ENCODE measurements at regions of chr3 and their contacts with region 1.

Region 1: GRCh38 chr3:12423918-12424630 is 60.2 kb upstream of the TSEN2 start:
- DNase-seq: no peak
- H3K4me3 Mint-ChIP-seq: no peak overlapping the region
- H3K27ac Mint-ChIP-seq: peak overlapping the region; percentile 66
- H3K4me1 Mint-ChIP-seq: peaks cover 52% of the 10 kb centered on the region
- H3K27me3 Mint-ChIP-seq: no peaks in the 10 kb centered on the region

Region 2: DNA sequence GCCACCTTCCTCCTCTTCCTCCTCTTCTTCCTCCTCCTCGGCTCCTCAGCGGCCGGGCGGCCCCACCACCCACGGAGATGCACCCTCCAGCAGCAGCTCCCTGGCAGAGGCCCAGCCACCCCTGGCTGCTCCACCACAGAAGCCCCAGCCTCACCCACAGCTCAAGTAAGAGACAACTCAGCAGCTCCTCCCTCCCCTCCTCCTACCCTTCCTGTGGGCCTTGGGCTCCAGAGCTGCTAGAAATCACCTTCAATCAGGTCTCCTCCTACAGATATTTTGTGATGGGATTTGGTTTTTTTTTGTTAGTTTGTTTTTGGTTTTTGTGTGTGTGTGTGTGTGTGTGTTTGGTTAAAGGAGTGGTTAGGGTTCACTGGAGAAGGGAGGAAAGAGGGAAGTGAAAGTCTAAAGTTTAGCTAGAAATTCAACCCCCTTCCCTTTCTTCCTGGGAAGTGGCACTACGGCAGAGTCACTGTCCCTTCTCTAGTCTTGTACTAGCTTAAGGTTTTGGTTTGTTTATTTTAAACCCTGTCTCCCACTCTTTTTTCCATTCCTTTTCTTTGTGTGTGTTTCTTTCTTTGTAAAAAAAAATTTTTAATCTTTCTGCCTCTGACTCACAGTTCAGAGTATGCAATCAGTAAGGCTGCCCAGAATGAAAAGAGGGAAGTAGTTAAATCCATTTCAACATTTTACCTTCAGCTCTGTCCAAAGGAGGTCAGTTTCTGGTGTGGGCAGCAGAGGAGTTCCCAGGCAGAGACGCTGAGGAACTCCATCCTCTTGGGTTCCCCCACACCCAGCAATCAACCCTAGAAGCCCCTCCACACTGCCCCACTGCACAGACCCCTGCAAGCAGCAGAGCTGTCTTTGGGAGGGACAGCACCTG is 236.4 kb before region 1 on chr3:
- intact Hi-C with region 1: loop called (anchors 2 kb)
- DNase-seq: peak; percentile 50
- H3K4me3 Mint-ChIP-seq: peak overlapping the region; percentile 32
- H3K27ac Mint-ChIP-seq: peak overlapping the region; percentile 93
- H3K4me1 Mint-ChIP-seq: peaks cover 78% of the 10 kb centered on the region
- H3K27me3 Mint-ChIP-seq: no peaks in the 10 kb centered on the region

Region 3: DNA sequence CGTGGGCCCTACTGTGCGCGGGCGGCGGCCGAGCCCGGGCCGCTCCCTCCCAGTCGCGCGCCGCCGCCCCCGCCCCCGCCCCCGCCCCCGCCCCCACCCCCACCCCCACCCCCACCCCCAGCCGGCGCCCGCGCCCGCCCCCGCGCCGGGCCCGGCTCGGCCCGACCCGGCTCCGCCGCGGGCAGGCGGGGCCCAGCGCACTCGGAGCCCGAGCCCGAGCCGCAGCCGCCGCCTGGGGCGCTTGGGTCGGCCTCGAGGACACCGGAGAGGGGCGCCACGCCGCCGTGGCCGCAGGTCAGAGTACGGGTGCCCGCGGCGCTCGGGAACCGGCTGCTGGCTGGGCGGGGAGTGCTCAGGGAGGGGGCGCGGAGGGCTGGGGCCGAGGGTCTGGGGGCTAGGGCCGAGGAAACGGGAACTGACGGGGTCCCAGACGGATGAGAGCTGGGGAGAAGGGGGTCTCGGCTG is 136.3 kb before region 1 on chr3:
- intact Hi-C with region 1: loop called (anchors 5 kb)
- DNase-seq: no peak
- H3K4me3 Mint-ChIP-seq: peak overlapping the region; percentile 76
- H3K27ac Mint-ChIP-seq: peak overlapping the region; percentile 42
- H3K4me1 Mint-ChIP-seq: peaks cover 18% of the 10 kb centered on the region
- H3K27me3 Mint-ChIP-seq: peaks cover 33% of the 10 kb centered on the region

Region 4: DNA sequence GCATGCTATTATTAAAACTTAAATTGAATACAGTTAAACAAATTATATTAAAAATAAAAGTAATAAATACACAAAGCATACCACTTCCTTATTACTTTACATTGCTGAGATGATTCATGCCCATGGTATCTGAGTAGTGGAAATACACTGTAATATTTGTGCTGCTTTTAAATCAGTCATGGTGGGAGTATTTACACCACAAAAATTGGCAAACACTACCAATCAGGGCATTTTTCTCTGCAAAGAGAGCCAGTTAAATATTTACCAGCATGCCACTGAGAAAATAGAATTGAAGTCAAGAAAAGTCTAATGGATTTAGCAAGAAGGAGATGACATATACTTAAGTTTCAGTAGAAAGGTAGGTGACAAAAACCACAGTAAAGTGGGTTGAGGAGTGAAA is 115.6 kb before region 1 on chr3:
- intact Hi-C with region 1: loop called (anchors 1 kb)
- DNase-seq: no peak
- H3K4me3 Mint-ChIP-seq: no peak overlapping the region
- H3K27ac Mint-ChIP-seq: peak overlapping the region; percentile 82
- H3K4me1 Mint-ChIP-seq: peaks cover 34% of the 10 kb centered on the region
- H3K27me3 Mint-ChIP-seq: peaks cover 3% of the 10 kb centered on the region

Region 5: GRCh38 chr3:12336099-12336498 is 88.0 kb before region 1 on chr3:
- intact Hi-C with region 1: loop called (anchors 5 kb)
- DNase-seq: peak; percentile 11
- H3K4me3 Mint-ChIP-seq: peak overlapping the region; percentile 20
- H3K27ac Mint-ChIP-seq: peak overlapping the region; percentile 57
- H3K4me1 Mint-ChIP-seq: peaks cover 27% of the 10 kb centered on the region
- H3K27me3 Mint-ChIP-seq: peaks cover 1% of the 10 kb centered on the region

Region 6: GRCh38 chr3:12384451-12385233 is 39.4 kb before region 1 on chr3:
- intact Hi-C with region 1: loop called (anchors 5 kb)
- DNase-seq: no peak
- H3K4me3 Mint-ChIP-seq: no peak overlapping the region
- H3K27ac Mint-ChIP-seq: no peak overlapping the region
- H3K4me1 Mint-ChIP-seq: peaks cover 34% of the 10 kb centered on the region
- H3K27me3 Mint-ChIP-seq: peaks cover 12% of the 10 kb centered on the region

Region 7: GRCh38 chr3:12471243-12471651 is 47.2 kb after region 1 on chr3:
- intact Hi-C with region 1: loop called (anchors 2 kb)
- DNase-seq: no peak
- H3K4me3 Mint-ChIP-seq: peak overlapping the region; percentile 10
- H3K27ac Mint-ChIP-seq: peak overlapping the region; percentile 62
- H3K4me1 Mint-ChIP-seq: peaks cover 18% of the 10 kb centered on the region
- H3K27me3 Mint-ChIP-seq: no peaks in the 10 kb centered on the region

Region 8: GRCh38 chr3:12495749-12496452 is 71.8 kb after region 1 on chr3:
- intact Hi-C with region 1: no loop called
- DNase-seq: no peak
- H3K4me3 Mint-ChIP-seq: no peak overlapping the region
- H3K27ac Mint-ChIP-seq: no peak overlapping the region
- H3K4me1 Mint-ChIP-seq: no peaks in the 10 kb centered on the region
- H3K27me3 Mint-ChIP-seq: no peaks in the 10 kb centered on the region